CD4-positive, alpha-beta memory T cell (primary cell): ENCODE measurements at regions of chr2 and their contacts with region 1.

Region 1: GRCh38 chr2:234483568-234484251 is 13.2 kb downstream of the ARL4C start:
- DNase-seq: peak; percentile 86 to 95 (median 88)
- H3K4me3 ChIP-seq: peak overlapping the region in 1 of 2 donors; percentile 5
- H3K4me3 Mint-ChIP-seq: peak overlapping the region; percentile 52 to 87 (median 76)
- H3K27ac ChIP-seq: peak overlapping the region; percentile 98
- H3K27ac Mint-ChIP-seq: peak overlapping the region; percentile 97 to 99 (median 98)
- H3K4me1 ChIP-seq: peaks cover 81% of the 10 kb centered on the region
- H3K4me1 Mint-ChIP-seq: peaks cover 64 to 94% (median 78%) of the 10 kb centered on the region in 4 donors
- H3K27me3 ChIP-seq: no peaks in the 10 kb centered on the region
- H3K27me3 Mint-ChIP-seq: no peaks in the 10 kb centered on the region

Region 2: GRCh38 chr2:233817361-233817911 is 666.3 kb before region 1 on chr2:
- CTCF ChIA-PET with region 1: no interaction called
- POLR2A ChIA-PET with region 1: no interaction called
- intact Hi-C with region 1: no loop called
- DNase-seq: no peak
- H3K4me3 ChIP-seq: no peak overlapping the region
- H3K4me3 Mint-ChIP-seq: no peak overlapping the region
- H3K27ac ChIP-seq: no peak overlapping the region
- H3K27ac Mint-ChIP-seq: peak overlapping the region in 1 of 7 donors; percentile 74
- H3K4me1 ChIP-seq: no peaks in the 10 kb centered on the region
- H3K4me1 Mint-ChIP-seq: no peaks in the 10 kb centered on the region
- H3K27me3 ChIP-seq: no peaks in the 10 kb centered on the region
- H3K27me3 Mint-ChIP-seq: peaks cover 0 to 11% of the 10 kb centered on the region in 2 donors

Region 3: GRCh38 chr2:234437642-234438304 is 45.9 kb before region 1 on chr2:
- CTCF ChIA-PET with region 1: interaction called, 11 read pairs
- POLR2A ChIA-PET with region 1: interaction called, 5 read pairs
- intact Hi-C with region 1: no loop called
- DNase-seq: no peak
- H3K4me3 ChIP-seq: no peak overlapping the region
- H3K4me3 Mint-ChIP-seq: peak overlapping the region in 3 of 8 donors; percentile 6 to 43 (median 22)
- H3K27ac ChIP-seq: no peak overlapping the region
- H3K27ac Mint-ChIP-seq: peak overlapping the region in 2 of 7 donors; percentile 68 to 88
- H3K4me1 ChIP-seq: peaks cover 72% of the 10 kb centered on the region
- H3K4me1 Mint-ChIP-seq: peaks cover 46 to 88% (median 65%) of the 10 kb centered on the region in 4 donors
- H3K27me3 ChIP-seq: no peaks in the 10 kb centered on the region
- H3K27me3 Mint-ChIP-seq: no peaks in the 10 kb centered on the region

Region 4: DNA sequence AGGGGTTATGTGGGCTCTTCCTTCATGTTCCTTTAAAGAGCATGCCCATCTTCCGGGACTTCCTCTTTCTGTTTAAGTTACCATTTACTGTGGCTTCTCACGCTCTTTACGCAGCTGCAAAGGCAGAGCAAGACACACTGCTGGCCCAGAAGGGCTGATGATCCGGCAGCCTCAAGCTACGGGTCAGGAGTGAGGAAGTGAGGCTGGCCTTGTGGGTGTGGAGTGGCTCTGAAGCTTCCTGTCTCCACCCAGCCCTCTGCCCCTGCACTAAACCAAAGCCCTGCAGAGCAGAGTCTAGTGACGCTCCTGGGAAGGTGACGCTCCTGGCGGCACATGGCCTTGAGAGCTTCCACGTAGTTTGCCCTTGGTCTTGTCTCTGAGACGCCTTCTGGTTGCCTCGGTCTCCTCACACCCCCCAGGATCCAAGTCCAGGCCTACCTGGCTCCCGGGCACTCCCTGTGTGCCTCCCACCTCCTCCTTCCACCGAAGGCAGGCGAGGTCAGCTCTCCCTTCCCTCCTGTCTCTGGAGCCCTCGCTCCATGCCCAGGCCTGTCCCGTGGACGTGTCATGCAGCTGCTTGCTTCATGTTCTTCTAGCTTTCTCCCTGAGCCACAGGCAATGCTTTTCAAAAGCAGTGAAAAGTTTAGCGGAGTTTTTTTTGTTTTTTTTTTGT is 37.2 kb before region 1 on chr2:
- CTCF ChIA-PET with region 1: interaction called, 14 read pairs
- POLR2A ChIA-PET with region 1: interaction called, 859 read pairs
- intact Hi-C with region 1: loop called (anchors 1 kb)
- DNase-seq: peak; percentile 87 to 92 (median 90)
- H3K4me3 ChIP-seq: no peak overlapping the region
- H3K4me3 Mint-ChIP-seq: peak overlapping the region; percentile 38 to 90 (median 80)
- H3K27ac ChIP-seq: peak overlapping the region; percentile 84
- H3K27ac Mint-ChIP-seq: peak overlapping the region; percentile 98 to 100 (median 100)
- H3K4me1 ChIP-seq: peaks cover 95% of the 10 kb centered on the region
- H3K4me1 Mint-ChIP-seq: peaks cover 69 to 96% (median 77%) of the 10 kb centered on the region in 4 donors
- H3K27me3 ChIP-seq: no peaks in the 10 kb centered on the region
- H3K27me3 Mint-ChIP-seq: no peaks in the 10 kb centered on the region

Region 5: DNA sequence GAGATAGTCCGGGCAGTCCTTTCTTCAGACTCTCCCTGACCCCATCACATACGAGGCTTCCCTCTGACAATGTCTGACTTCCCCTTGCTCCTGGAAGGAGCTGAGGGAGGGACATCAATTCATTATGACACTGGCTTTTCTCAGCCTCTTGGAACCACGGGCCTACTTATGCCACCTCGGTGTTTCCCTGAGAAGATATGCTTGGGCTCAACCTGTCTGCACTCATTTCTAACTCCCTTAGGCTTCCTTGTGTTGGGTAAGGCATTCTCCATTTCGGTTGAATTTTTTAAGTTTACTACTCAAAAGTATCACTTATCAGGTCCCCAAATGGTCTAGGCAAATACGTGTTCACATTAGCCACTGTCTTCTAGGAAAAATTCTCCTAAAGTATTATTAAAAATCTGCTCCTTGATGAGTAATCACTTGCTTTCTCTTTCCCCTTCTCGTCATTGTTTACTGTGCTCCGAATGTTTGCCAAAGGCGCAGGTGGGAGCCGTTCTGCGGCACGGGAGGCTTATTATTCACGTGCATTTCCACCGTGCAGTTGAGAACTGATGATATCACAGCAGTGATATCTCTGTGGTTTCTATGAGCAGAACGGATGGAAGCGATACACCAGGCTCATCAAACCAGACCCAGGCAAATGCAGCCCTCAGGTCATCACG is 20.0 kb before region 1 on chr2:
- CTCF ChIA-PET with region 1: interaction called, 17 read pairs
- POLR2A ChIA-PET with region 1: interaction called, 859 read pairs
- intact Hi-C with region 1: loop called (anchors 1 kb)
- DNase-seq: peak; percentile 83 to 90 (median 87)
- H3K4me3 ChIP-seq: peak overlapping the region; percentile 12 to 48
- H3K4me3 Mint-ChIP-seq: peak overlapping the region; percentile 69 to 86 (median 81)
- H3K27ac ChIP-seq: peak overlapping the region; percentile 86
- H3K27ac Mint-ChIP-seq: peak overlapping the region; percentile 88 to 99 (median 97)
- H3K4me1 ChIP-seq: peaks cover 81% of the 10 kb centered on the region
- H3K4me1 Mint-ChIP-seq: peaks cover 49 to 94% (median 73%) of the 10 kb centered on the region in 4 donors
- H3K27me3 ChIP-seq: no peaks in the 10 kb centered on the region
- H3K27me3 Mint-ChIP-seq: no peaks in the 10 kb centered on the region

Region 6: DNA sequence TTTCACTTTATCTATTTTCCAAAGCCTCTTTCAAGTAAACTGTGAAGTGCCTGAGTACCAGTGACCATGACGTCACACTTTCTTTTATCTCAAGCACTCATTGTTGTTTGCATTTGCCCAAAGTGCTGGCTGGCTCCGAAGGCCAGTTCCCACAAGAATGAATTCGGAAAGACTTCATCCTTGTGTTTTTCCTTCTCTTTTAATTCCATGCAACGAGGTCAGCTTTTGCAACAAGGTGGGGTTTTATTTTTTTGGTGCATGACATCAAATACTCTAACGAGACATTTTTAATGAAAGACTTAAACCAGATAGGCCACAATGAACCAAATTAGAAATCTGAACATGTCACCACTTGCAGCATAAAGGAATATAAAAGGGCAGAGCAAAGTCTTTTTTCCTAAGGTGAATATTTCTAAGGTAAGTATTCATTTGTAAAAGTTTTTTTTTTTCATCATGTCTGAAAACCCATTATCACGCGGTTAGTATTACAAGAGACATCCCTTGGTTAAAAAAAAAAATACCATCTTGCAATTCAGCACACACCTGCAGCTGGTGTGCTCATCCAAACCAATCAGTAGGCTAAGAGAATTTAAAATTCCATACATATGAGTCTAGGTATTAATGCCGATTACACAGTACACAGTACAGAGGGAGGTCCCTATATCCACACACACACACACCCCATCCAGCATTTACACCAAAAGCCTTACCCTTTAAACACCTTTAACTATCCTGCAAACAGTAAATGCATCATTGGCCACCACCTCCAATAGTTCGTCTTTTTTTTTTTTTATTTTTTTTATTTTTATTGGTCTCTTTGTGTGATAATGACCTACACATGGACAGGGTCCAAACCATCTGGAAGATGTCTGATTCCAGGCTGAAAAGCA is 10.9 kb after region 1 on chr2:
- CTCF ChIA-PET with region 1: interaction called, 15 read pairs
- POLR2A ChIA-PET with region 1: interaction called, 92 read pairs
- intact Hi-C with region 1: loop called (anchors 1 kb)
- DNase-seq: peak; percentile 60 to 74 (median 65)
- H3K4me3 ChIP-seq: peak overlapping the region; percentile 78 to 97
- H3K4me3 Mint-ChIP-seq: peak overlapping the region; percentile 95 to 100 (median 98)
- H3K27ac ChIP-seq: peak overlapping the region; percentile 98
- H3K27ac Mint-ChIP-seq: peak overlapping the region; percentile 97 to 100 (median 99)
- H3K4me1 ChIP-seq: peaks cover 52% of the 10 kb centered on the region
- H3K4me1 Mint-ChIP-seq: peaks cover 39 to 76% (median 49%) of the 10 kb centered on the region in 4 donors
- H3K27me3 ChIP-seq: no peaks in the 10 kb centered on the region
- H3K27me3 Mint-ChIP-seq: no peaks in the 10 kb centered on the region

Region 7: GRCh38 chr2:234670052-234670451 is 186.3 kb after region 1 on chr2:
- CTCF ChIA-PET with region 1: no interaction called
- POLR2A ChIA-PET with region 1: no interaction called
- intact Hi-C with region 1: no loop called
- DNase-seq: no peak
- H3K4me3 ChIP-seq: no peak overlapping the region
- H3K4me3 Mint-ChIP-seq: no peak overlapping the region
- H3K27ac ChIP-seq: no peak overlapping the region
- H3K27ac Mint-ChIP-seq: no peak overlapping the region
- H3K4me1 ChIP-seq: no peaks in the 10 kb centered on the region
- H3K4me1 Mint-ChIP-seq: no peaks in the 10 kb centered on the region
- H3K27me3 ChIP-seq: no peaks in the 10 kb centered on the region
- H3K27me3 Mint-ChIP-seq: peaks cover 19% of the 10 kb centered on the region in 2 donors

Region 8: DNA sequence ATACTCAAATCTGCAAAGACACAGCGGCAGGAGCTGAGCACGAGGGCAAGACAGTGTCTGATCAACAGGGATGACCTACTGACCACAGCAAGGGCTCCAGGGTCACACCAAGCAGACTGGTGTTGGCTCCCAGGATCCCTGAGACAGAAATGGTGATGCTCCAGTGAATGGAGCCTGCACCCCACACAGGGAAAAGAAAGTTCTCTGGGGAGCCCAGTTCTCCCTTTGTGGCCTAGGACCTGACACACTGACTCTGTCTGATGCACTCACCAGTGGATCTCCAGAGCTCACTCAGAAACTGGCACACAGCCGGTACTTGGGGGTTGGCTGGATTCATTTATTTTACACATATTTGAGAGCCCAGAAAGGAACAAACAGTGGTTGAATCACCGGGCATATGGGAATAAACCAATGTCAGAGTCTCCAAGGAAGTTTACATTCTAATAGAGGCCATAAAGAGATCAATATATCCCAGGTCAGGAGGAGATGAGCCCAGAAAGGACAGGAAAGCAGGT is 228.8 kb after region 1 on chr2:
- CTCF ChIA-PET with region 1: no interaction called
- POLR2A ChIA-PET with region 1: no interaction called
- intact Hi-C with region 1: no loop called
- DNase-seq: no peak
- H3K4me3 ChIP-seq: no peak overlapping the region
- H3K4me3 Mint-ChIP-seq: no peak overlapping the region
- H3K27ac ChIP-seq: no peak overlapping the region
- H3K27ac Mint-ChIP-seq: no peak overlapping the region
- H3K4me1 ChIP-seq: no peaks in the 10 kb centered on the region
- H3K4me1 Mint-ChIP-seq: no peaks in the 10 kb centered on the region
- H3K27me3 ChIP-seq: no peaks in the 10 kb centered on the region
- H3K27me3 Mint-ChIP-seq: peaks cover 11 to 16% of the 10 kb centered on the region in 2 donors